Activated CD4-positive, alpha-beta T cell treated with anti-CD3 and anti-CD28 coated beads, Interleukin-2, amount 10 ng/mL, durations not matched to agents 24 days and 14 days (primary cell): ENCODE measurements at regions of chr13 and their contacts with region 1.

Region 1: GRCh38 chr13:108895220-108895704 is 265.9 kb downstream of the MYO16 start:
- DNase-seq: no peak
- H3K4me3 Mint-ChIP-seq: no peak overlapping the region
- H3K27ac Mint-ChIP-seq: no peak overlapping the region
- H3K4me1 Mint-ChIP-seq: peaks cover 11% of the 10 kb centered on the region
- H3K27me3 Mint-ChIP-seq: peaks cover 11% of the 10 kb centered on the region

Region 2: GRCh38 chr13:108056278-108056677 is 839.0 kb before region 1 on chr13:
- intact Hi-C with region 1: no loop called
- DNase-seq: no peak
- H3K4me3 Mint-ChIP-seq: no peak overlapping the region
- H3K27ac Mint-ChIP-seq: no peak overlapping the region
- H3K4me1 Mint-ChIP-seq: no peaks in the 10 kb centered on the region
- H3K27me3 Mint-ChIP-seq: no peaks in the 10 kb centered on the region

Region 3: DNA sequence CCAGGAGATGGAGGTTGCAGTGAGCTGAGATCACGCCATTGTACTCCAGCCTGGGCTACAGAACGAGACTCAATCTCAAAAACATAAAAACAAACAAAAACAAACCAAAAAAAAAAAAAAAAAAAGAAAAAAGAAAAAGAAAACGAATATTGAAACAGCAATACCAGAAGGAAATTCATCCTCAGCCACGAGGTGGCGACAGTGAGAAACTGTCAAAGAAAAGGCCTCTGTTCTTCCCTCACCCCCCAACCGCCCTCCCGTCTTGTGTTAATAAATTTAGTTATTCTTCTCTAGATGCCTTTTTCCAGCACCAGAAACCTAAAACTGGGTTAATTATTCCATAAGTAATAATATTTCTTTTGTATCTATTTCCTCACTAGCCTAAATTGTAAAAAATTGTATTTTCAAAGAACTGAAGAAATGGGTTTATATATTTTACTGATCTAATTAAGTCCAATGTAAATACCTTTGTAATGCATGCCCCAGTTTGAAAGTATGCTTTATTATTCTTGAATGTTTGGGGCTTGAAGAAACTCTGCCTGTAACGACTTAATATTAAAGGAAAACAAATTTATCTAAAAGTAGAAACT is 718.5 kb before region 1 on chr13:
- intact Hi-C with region 1: loop called (anchors 5 kb)
- DNase-seq: peak; percentile 84
- H3K4me3 Mint-ChIP-seq: no peak overlapping the region
- H3K27ac Mint-ChIP-seq: no peak overlapping the region
- H3K4me1 Mint-ChIP-seq: no peaks in the 10 kb centered on the region
- H3K27me3 Mint-ChIP-seq: peaks cover 2% of the 10 kb centered on the region

Region 4: DNA sequence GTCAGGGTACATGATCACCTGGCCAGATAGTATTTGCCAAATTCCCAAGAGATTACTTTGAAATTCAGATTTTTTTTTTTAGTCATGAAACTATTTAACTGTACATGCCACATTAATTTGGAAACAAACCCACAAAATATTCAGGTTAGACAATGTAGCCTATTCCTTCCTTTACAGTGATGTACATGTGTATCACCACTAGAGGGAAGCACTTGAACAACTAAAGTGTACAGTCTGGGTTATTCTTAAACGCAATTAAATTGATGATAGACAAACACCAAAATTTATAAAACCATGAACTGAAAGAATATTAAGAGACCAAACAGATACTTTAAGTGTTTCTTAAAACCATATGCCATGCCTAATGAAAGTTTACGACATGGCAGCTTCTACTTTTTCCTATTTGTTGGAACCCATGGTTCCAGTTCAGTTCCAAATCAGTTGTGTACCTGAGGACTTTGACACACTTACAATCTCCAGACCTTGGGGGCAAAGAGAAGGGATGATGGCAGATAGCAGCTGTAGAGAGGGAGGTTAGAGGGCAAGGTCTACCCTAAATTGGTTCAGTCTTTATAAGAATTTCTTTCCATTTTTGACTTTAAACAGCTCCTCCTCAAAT is 572.9 kb before region 1 on chr13:
- intact Hi-C with region 1: loop called (anchors 1 kb)
- DNase-seq: no peak
- H3K4me3 Mint-ChIP-seq: no peak overlapping the region
- H3K27ac Mint-ChIP-seq: no peak overlapping the region
- H3K4me1 Mint-ChIP-seq: peaks cover 3% of the 10 kb centered on the region
- H3K27me3 Mint-ChIP-seq: peaks cover 34% of the 10 kb centered on the region